Activated CD4-positive, alpha-beta T cell treated with anti-CD3 and anti-CD28 coated beads for 36 hours (primary cell): ENCODE measurements at regions of chr10 and their contacts with region 1.

Region 1: GRCh38 chr10:123241391-123242141 is 87.4 kb downstream of the BUB3 start:
- DNase-seq: peak; percentile 48
- ATAC-seq: peak; percentile 88
- H3K4me3 Mint-ChIP-seq: no peak overlapping the region
- H3K27ac Mint-ChIP-seq: peak overlapping the region; percentile 90
- H3K4me1 Mint-ChIP-seq: peaks cover 23% of the 10 kb centered on the region
- H3K27me3 Mint-ChIP-seq: no peaks in the 10 kb centered on the region

Region 2: GRCh38 chr10:123126246-123126645 is 115.3 kb before region 1 on chr10:
- CTCF ChIA-PET with region 1: no interaction called
- POLR2A ChIA-PET with region 1: no interaction called
- intact Hi-C with region 1: no loop called
- DNase-seq: no peak
- ATAC-seq: no peak
- H3K4me3 Mint-ChIP-seq: no peak overlapping the region
- H3K27ac Mint-ChIP-seq: no peak overlapping the region
- H3K4me1 Mint-ChIP-seq: no peaks in the 10 kb centered on the region
- H3K27me3 Mint-ChIP-seq: peaks cover 41% of the 10 kb centered on the region

Region 3: GRCh38 chr10:123287594-123288247 is 46.2 kb after region 1 on chr10:
- CTCF ChIA-PET with region 1: no interaction called
- POLR2A ChIA-PET with region 1: no interaction called
- intact Hi-C with region 1: loop called in 1 of 2 experiments (anchors 2 kb)
- DNase-seq: peak; percentile 75
- ATAC-seq: peak; percentile 99
- H3K4me3 Mint-ChIP-seq: no peak overlapping the region
- H3K27ac Mint-ChIP-seq: peak overlapping the region; percentile 70
- H3K4me1 Mint-ChIP-seq: peaks cover 22% of the 10 kb centered on the region
- H3K27me3 Mint-ChIP-seq: peaks cover 3% of the 10 kb centered on the region